Right ventricle myocardium superior (tissue), 1 donor: ENCODE measurements at regions of chr9 and their contacts with region 1.

Region 1: DNA sequence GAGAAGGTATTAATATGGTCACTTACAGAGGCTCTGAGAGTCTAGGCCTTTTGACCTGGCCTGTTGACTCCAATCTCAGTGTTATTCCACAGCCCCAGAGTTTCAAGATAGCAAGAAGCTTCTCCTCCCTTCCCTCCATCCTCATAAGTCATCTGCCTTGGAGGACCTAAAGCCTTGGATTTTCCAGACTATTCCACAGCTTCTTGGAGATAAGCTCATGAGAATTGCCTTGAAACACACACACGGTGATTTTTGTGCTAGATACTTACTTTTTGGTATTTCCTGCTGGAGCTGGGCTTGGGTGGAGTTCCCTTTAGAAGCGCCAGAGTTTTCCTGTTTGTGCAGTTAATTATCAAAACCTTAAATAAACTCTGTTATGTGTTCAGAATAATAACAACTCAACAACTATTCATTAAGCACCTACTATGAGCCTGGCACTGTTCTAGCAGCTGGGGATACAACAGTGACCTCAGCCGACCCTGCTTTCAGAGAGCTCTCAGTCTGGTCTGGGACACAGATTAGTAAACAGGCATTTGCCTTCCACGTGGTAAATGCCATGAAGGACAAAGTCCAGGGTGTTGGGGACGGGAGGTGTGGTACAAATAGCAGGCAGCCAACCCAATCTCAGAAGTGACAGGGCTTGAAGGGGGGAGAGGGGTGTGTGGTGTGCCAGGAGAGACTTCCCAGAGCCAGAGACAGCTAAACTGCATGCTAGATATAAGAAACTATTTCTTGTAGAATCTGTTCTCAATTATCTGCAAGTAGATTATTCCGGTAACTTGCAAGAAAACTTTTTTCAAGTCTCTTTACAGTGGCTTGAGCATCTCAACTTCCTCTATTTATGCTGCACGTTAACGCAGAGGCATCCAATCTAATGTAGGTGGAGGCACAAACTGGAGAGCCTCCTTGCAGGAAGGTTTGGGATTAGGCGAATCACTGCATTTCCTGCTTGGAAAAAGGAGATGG is 55.9 kb upstream of the KLF9 start:
- DNase-seq: peak; percentile 63
- ATAC-seq: peak; percentile 89

Region 2: GRCh38 chr9:70419546-70420266 is 50.6 kb before region 1 on chr9:
- intact Hi-C with region 1: loop called (anchors 2 kb)
- DNase-seq: peak; percentile 98
- ATAC-seq: peak; percentile 71

Region 3: DNA sequence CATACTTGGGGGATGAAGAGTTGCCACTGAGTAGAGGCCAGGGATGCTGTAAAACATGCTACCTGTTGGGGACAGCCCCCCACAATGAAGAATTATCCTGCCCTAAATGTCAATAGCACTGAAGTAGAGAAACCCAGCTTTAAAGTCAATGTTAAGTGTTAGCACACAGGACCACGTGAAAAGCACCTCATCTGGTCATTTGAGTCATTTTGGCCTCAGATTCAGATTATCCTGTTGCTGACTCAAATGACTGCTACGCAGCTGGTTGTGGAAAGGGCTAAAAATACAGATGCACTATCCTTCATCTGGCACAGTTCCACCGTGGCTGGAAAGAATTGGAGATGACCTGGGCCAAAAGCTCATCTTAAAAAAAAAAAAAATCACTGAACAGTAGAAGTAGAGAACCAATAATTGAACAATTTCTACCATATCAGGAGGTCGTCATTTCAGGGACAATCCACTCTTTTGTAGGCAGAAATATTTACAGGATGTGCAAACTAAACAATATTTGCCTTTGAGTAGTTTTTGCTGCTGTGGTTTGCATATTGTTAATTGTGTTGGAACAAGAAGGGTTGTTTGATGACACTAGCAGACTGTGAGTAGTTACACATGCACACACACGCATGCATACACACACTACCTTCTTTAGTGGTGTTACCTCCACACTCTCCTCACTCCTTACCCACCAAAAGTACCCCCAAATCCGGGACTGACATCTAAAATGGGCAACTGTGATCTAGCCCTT is 139.4 kb after region 1 on chr9:
- intact Hi-C with region 1: no loop called
- DNase-seq: no peak
- ATAC-seq: peak; percentile 61

Region 4: GRCh38 chr9:71249729-71250317 is 779.5 kb after region 1 on chr9:
- intact Hi-C with region 1: no loop called
- DNase-seq: no peak
- ATAC-seq: peak; percentile 53